ENCODE measurements at regions of chr11 and their contacts with region 1.

Region 1: DNA sequence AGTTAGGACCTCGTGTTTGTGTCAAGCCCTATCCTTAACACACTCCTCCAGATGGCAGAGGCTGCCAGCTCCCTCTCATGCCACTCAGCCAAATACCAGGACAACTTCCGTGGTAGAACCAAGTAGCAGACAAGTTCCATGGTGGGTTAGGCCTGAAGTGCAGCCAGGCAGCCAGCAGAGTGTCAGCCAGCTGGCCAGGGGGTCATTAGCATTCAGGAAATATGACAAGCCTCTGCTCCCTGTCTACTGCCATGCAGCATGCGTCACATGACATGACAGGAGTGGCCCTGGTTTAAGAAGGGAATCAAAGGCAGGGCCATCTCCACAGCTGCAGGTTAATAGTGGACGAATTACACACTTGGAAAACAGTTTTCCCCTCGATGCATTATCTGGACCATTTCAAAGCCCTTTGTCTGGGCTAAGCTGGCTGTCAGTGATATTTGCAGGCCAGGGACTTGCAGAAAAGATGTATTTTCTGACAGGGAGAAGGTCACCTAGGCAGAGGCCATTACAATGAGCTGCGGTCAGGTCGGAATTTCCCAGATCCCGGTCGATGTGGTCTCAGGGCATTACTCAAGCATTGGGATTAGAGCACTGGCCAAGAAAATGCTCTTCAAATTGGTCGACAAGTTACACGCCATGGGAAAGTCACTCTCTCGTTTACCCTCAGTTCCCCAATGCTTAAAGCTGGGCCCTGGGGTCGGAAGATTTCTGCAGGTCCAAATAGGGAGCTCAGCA is 461.7 kb upstream of the CADM1 start:
- DNase-seq: no peak
- ATAC-seq: no peak
- H3K4me3 ChIP-seq: no peak overlapping the region
- H3K4me3 Mint-ChIP-seq: no peak overlapping the region
- H3K27ac ChIP-seq: no peak overlapping the region
- H3K27ac Mint-ChIP-seq: no peak overlapping the region
- H3K4me1 ChIP-seq: no peaks in the 10 kb centered on the region
- H3K4me1 Mint-ChIP-seq: no peaks in the 10 kb centered on the region
- H3K27me3 ChIP-seq: no peaks in the 10 kb centered on the region
- H3K27me3 Mint-ChIP-seq: peaks cover 0 to 3% of the 10 kb centered on the region in 2 donors
- CTCF ChIP-seq: no peak

Region 2: GRCh38 chr11:115933564-115933963 is 32.4 kb before region 1 on chr11:
- intact Hi-C with region 1: loop called (anchors 1 kb)
- DNase-seq: no peak
- ATAC-seq: no peak
- H3K4me3 ChIP-seq: no peak overlapping the region
- H3K4me3 Mint-ChIP-seq: no peak overlapping the region
- H3K27ac ChIP-seq: no peak overlapping the region
- H3K27ac Mint-ChIP-seq: no peak overlapping the region
- H3K4me1 ChIP-seq: peaks cover 7% of the 10 kb centered on the region
- H3K4me1 Mint-ChIP-seq: peaks cover 0 to 13% of the 10 kb centered on the region in 2 donors
- H3K27me3 ChIP-seq: no peaks in the 10 kb centered on the region
- H3K27me3 Mint-ChIP-seq: peaks cover 0 to 7% of the 10 kb centered on the region in 2 donors
- CTCF ChIP-seq: no peak